ENCODE measurements at regions of chr11 and their contacts with region 1.

Region 1: DNA sequence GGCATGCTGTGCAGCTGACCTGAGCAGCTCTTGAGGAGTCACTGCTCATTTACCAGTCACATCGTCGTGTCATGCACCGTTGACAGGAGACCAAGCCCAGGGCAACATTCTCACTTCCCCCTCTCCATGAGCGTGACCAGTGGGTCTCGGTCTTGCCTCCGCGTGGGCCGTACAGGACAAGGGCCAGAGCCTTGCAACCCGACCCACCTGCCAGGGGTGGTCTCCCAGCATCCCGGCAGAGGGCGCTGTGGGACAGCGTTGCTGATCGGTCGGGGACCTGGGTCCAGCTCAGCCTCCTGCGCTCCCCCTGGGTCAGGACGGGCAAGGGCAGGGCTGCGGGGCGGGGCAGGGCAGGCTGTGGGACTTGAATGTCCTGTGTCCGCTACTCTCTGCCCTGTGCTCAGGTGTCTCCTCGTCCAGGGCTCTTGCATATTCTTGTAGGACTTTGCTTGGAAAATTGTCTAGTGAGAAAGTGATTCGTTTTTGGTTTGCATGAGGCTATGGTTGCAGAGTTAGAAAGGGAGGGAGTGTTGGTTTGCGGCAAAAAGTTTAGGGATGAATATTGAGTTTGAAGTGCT is 16.2 kb downstream of the EIF4G2 start:
- DNase-seq: peak; percentile 93
- ATAC-seq: peak; percentile 96
- H3K4me3 Mint-ChIP-seq: no peak overlapping the region
- H3K27ac Mint-ChIP-seq: no peak overlapping the region
- H3K4me1 Mint-ChIP-seq: peaks cover 21% of the 10 kb centered on the region
- H3K27me3 Mint-ChIP-seq: peaks cover 3% of the 10 kb centered on the region

Region 2: GRCh38 chr11:10803676-10804075 is 11.2 kb after region 1 on chr11:
- CTCF ChIA-PET with region 1: interaction called, 60 read pairs
- POLR2A ChIA-PET with region 1: interaction called, 32 read pairs
- intact Hi-C with region 1: no loop called
- DNase-seq: no peak
- ATAC-seq: no peak
- H3K4me3 Mint-ChIP-seq: no peak overlapping the region
- H3K27ac Mint-ChIP-seq: peak overlapping the region; percentile 75
- H3K4me1 Mint-ChIP-seq: peaks cover 77% of the 10 kb centered on the region
- H3K27me3 Mint-ChIP-seq: no peaks in the 10 kb centered on the region

Region 3: GRCh38 chr11:11016068-11016467 is 223.6 kb after region 1 on chr11:
- CTCF ChIA-PET with region 1: interaction called, 29 read pairs
- POLR2A ChIA-PET with region 1: interaction called, 3 read pairs
- intact Hi-C with region 1: no loop called
- DNase-seq: no peak
- ATAC-seq: peak; percentile 23
- H3K4me3 Mint-ChIP-seq: no peak overlapping the region
- H3K27ac Mint-ChIP-seq: no peak overlapping the region
- H3K4me1 Mint-ChIP-seq: no peaks in the 10 kb centered on the region
- H3K27me3 Mint-ChIP-seq: peaks cover 4% of the 10 kb centered on the region

Region 4: GRCh38 chr11:11028017-11028692 is 235.7 kb after region 1 on chr11:
- CTCF ChIA-PET with region 1: interaction called, 26 read pairs
- POLR2A ChIA-PET with region 1: no interaction called
- intact Hi-C with region 1: no loop called
- DNase-seq: peak; percentile 88
- ATAC-seq: peak; percentile 91
- H3K4me3 Mint-ChIP-seq: no peak overlapping the region
- H3K27ac Mint-ChIP-seq: no peak overlapping the region
- H3K4me1 Mint-ChIP-seq: no peaks in the 10 kb centered on the region
- H3K27me3 Mint-ChIP-seq: no peaks in the 10 kb centered on the region